Natural killer cell (primary cell): ENCODE measurements at regions of chr1 and their contacts with region 1.

Region 1: DNA sequence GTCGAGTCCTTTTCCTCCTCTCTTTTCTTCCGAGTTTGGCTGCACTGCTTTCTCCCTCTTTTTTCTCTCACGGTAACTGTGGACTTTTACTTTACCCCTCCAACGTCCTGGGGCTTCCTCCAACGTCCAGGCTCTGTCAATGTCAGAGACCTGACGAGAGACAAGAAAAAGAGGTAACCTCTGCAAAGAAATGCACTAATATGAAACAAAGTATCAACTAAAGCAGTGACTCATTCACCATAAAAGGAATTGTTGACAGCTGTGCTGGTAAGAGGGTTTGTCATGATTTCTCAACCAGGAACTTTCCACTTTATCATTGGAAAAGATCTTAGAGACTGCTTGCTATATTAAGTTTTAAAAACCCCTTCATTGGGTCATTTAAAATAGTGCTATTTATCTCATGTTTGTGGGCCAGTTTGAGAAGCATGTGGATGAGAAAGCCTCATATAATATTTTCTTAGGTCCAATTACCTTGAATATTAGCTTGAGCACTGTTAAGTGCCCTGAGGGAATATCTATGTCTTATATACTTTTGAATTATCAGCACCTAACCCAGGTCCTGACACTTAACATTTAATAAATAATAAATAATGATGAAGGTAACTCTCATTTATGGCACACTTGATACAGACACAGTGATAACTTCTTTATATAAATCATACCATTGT is at the start of gene GBP2:
- DNase-seq: peak; percentile 34 to 69
- ATAC-seq: peak; percentile 77 to 85 (median 84)
- H3K4me3 ChIP-seq: peak within 1 kb of the TSS; percentile 64
- H3K4me3 Mint-ChIP-seq: peak within 1 kb of the TSS; percentile 100
- H3K27ac ChIP-seq: peak within 1 kb of the TSS; percentile 79
- H3K27ac Mint-ChIP-seq: peak within 1 kb of the TSS; percentile 94 to 97
- H3K4me1 ChIP-seq: peaks cover 32% of the 10 kb centered on the region
- H3K4me1 Mint-ChIP-seq: peaks cover 71 to 77% of the 10 kb centered on the region in 2 donors
- H3K27me3 ChIP-seq: no peaks in the 10 kb centered on the region
- H3K27me3 Mint-ChIP-seq: no peaks in the 10 kb centered on the region
- CTCF ChIP-seq: no peak
- total RNA-seq, gene GBP2: 117 to 153 (median 144) TPM

Region 2: DNA sequence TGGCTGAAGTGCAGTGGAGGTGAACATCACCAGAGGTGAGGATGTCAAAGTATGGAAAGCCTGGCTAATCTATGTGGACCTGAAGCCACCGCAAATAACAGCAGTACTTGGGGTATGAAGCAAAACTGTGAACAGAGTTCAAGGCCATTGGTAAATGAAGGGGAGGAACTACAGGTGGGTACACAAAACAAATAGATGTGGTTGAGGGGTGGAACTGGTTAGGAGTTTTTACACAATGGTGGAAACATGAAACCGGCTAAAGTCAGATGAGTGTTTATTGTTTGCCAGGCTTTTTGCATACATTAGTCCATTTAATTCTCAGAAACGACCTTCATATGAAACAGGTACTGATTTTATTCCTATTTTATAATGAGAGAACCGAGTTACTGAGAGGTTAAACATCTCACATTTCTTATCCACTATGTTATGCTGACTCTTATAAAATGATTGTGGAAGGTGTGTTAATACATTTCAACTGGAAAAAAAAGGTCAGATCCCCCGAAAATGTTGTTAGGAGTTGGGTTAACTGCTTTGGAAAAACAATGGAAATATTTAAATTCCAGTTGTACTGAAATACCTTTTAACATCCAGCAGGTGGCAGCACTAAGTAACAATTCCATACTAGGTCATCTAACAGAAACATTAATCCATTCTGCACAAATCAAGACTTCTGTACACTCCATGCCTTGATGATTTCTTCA is 190.4 kb before region 1 on chr1:
- intact Hi-C with region 1: no loop called
- DNase-seq: peak in 1 of 2 donors; percentile 71
- ATAC-seq: peak in 2 of 3 donors; percentile 69 to 70
- H3K4me3 ChIP-seq: no peak overlapping the region
- H3K4me3 Mint-ChIP-seq: no peak overlapping the region
- H3K27ac ChIP-seq: no peak overlapping the region
- H3K27ac Mint-ChIP-seq: no peak overlapping the region
- H3K4me1 ChIP-seq: no peaks in the 10 kb centered on the region
- H3K4me1 Mint-ChIP-seq: no peaks in the 10 kb centered on the region
- H3K27me3 ChIP-seq: no peaks in the 10 kb centered on the region
- H3K27me3 Mint-ChIP-seq: no peaks in the 10 kb centered on the region
- CTCF ChIP-seq: peak; percentile 75

Region 3: DNA sequence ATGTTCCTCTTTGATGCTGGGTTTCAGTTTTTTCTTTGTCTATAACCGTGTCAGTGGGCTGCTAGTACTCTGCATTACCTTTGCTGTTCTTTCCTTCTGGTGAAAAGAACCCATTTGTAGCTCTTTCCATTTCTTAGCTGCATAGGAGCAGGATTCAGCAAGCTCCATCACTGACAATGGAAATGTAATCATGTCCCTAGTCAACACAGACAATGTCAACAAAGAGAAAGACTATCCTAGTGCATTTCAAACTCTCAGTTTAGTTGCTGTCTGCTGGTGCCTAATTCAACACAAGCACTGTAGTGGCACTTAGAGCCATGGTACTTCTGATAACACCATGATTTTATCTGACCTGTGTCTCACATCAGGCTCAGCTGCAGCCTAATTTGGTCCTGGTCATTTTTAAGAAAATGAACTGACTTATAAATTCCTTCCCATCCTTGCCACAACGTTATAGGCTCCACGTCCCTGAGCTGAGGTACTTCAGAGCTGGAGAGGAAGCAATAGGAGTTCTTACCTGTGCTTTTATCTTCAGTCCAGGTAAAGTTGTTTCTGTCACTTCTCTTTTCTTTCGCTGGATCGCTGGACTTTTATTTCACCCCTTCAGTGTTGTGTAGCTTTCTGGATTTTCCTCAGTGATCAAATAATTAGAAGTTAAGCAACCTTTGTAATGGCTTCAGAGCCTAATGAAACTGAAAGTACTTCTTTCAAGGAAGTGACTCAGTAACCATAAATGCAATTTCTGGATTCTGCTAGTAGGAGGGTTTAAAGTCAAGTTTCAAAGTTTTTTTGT is 103.7 kb before region 1 on chr1 and contains the start of gene GBP3:
- intact Hi-C with region 1: loop called (anchors 2 kb)
- DNase-seq: peak in 1 of 2 donors; percentile 67
- ATAC-seq: peak; percentile 82 to 84 (median 83)
- H3K4me3 ChIP-seq: peak within 1 kb of the TSS; percentile 60
- H3K4me3 Mint-ChIP-seq: peak within 1 kb of the TSS; percentile 95
- H3K27ac ChIP-seq: peak within 1 kb of the TSS; percentile 84
- H3K27ac Mint-ChIP-seq: peak within 1 kb of the TSS; percentile 86 to 92
- H3K4me1 ChIP-seq: peaks cover 24% of the 10 kb centered on the region
- H3K4me1 Mint-ChIP-seq: peaks cover 53 to 55% of the 10 kb centered on the region in 2 donors
- H3K27me3 ChIP-seq: no peaks in the 10 kb centered on the region
- H3K27me3 Mint-ChIP-seq: no peaks in the 10 kb centered on the region
- CTCF ChIP-seq: no peak
- total RNA-seq, gene GBP3: 36.1 to 52.5 (median 49.0) TPM

Region 4: GRCh38 chr1:89065079-89065868 is 60.8 kb before region 1 on chr1 and contains the start of gene GBP1:
- intact Hi-C with region 1: loop called (anchors 1 kb)
- DNase-seq: peak in 1 of 2 donors; percentile 73
- ATAC-seq: peak; percentile 86 to 88 (median 87)
- H3K4me3 ChIP-seq: peak within 1 kb of the TSS; percentile 89
- H3K4me3 Mint-ChIP-seq: peak within 1 kb of the TSS; percentile 98
- H3K27ac ChIP-seq: peak within 1 kb of the TSS; percentile 94
- H3K27ac Mint-ChIP-seq: peak within 1 kb of the TSS; percentile 87 to 95
- H3K4me1 ChIP-seq: peaks cover 9% of the 10 kb centered on the region
- H3K4me1 Mint-ChIP-seq: peaks cover 55 to 58% of the 10 kb centered on the region in 2 donors
- H3K27me3 ChIP-seq: no peaks in the 10 kb centered on the region
- H3K27me3 Mint-ChIP-seq: no peaks in the 10 kb centered on the region
- CTCF ChIP-seq: no peak
- total RNA-seq, gene GBP1: 32.0 to 41.2 (median 34.8) TPM

Region 5: GRCh38 chr1:89271341-89272015 is 145.4 kb after region 1 on chr1:
- intact Hi-C with region 1: loop called (anchors 2 kb)
- DNase-seq: no peak
- ATAC-seq: peak in 2 of 3 donors; percentile 36 to 41
- H3K4me3 ChIP-seq: peak overlapping the region; percentile 56
- H3K4me3 Mint-ChIP-seq: peak overlapping the region; percentile 96
- H3K27ac ChIP-seq: peak overlapping the region; percentile 59
- H3K27ac Mint-ChIP-seq: peak overlapping the region; percentile 98
- H3K4me1 ChIP-seq: peaks cover 24% of the 10 kb centered on the region
- H3K4me1 Mint-ChIP-seq: peaks cover 76 to 79% of the 10 kb centered on the region in 2 donors
- H3K27me3 ChIP-seq: no peaks in the 10 kb centered on the region
- H3K27me3 Mint-ChIP-seq: no peaks in the 10 kb centered on the region
- CTCF ChIP-seq: no peak

Region 6: GRCh38 chr1:89310505-89310904 is 184.5 kb after region 1 on chr1:
- intact Hi-C with region 1: loop called (anchors 2 kb)
- DNase-seq: peak in 1 of 2 donors; percentile 47
- ATAC-seq: peak; percentile 80 to 85 (median 84)
- H3K4me3 ChIP-seq: no peak overlapping the region
- H3K4me3 Mint-ChIP-seq: peak overlapping the region; percentile 73
- H3K27ac ChIP-seq: peak overlapping the region; percentile 79
- H3K27ac Mint-ChIP-seq: peak overlapping the region; percentile 91 to 98
- H3K4me1 ChIP-seq: peaks cover 22% of the 10 kb centered on the region
- H3K4me1 Mint-ChIP-seq: peaks cover 40 to 45% of the 10 kb centered on the region in 2 donors
- H3K27me3 ChIP-seq: no peaks in the 10 kb centered on the region
- H3K27me3 Mint-ChIP-seq: no peaks in the 10 kb centered on the region
- CTCF ChIP-seq: no peak